SK-N-SH (cell line): ENCODE measurements at regions of chr2 and their contacts with region 1.

Region 1: DNA sequence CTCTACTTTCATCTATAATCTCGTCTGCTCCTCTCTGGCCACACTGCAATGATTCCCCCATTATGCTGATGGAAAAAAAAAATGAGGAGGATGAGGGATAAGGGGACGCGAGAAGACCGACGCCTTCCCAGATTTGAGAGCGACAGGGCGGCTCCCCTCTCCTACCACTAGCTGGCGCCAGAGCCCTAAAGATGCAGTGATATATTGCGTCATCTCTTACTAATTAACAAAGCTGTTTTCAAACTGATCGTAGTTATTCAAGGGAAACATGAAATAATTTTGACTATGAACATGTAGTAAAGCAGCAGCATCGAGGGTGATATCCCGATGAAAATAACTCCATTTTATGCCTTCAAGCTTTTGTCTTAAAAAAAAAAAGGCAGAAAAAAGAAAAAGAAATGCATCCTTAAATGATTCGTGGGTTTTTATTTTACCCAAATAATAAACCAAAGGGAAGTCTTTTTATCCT is 48.0 kb upstream of the HNRNPA3 start:
- DNase-seq: peak; percentile 78
- H3K4me3 ChIP-seq: peak overlapping the region; percentile 35 to 59
- H3K27ac ChIP-seq: peak overlapping the region; percentile 39 to 43; a peak in 3 of 4 replicates
- H3K4me1 ChIP-seq: peaks cover 12 to 24% of the 10 kb centered on the region in 2 experiments; a peak in 3 of 4 replicates
- H3K27me3 ChIP-seq: no peaks in the 10 kb centered on the region
- CTCF ChIP-seq: peak; percentile 100
- EP300 ChIP-seq: peak in 1 of 2 experiments; percentile 11; a peak in 1 of 4 replicates
- RAD21 ChIP-seq: peak; percentile 99

Region 2: DNA sequence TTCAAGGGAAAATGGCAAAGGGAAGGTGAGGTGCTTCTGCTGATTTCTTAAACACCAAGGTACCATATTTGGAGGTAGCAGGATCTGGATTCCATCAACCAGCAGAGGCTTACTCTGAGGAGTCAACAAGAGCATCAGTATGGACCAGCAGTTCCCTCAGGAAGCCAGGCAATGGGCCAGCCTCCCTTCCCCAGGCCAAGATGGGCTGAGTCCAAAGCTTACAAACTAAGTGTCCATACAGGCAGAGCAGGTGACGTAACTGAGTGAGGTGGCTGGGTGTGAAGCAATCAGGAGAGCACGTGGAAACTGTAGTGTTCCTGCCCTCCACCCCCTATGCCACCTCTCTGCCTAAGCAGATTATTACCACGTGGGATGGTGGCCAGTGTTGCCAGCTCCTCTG is 86.2 kb before region 1 on chr2:
- CTCF ChIA-PET with region 1: no interaction called
- POLR2A ChIA-PET with region 1: no interaction called
- DNase-seq: no peak
- H3K4me3 ChIP-seq: no peak overlapping the region
- H3K27ac ChIP-seq: no peak overlapping the region
- H3K4me1 ChIP-seq: no peaks in the 10 kb centered on the region; a peak in 1 of 4 replicates
- H3K27me3 ChIP-seq: no peaks in the 10 kb centered on the region
- CTCF ChIP-seq: no peak
- EP300 ChIP-seq: no peak
- RAD21 ChIP-seq: no peak

Region 3: GRCh38 chr2:177148477-177149154 is 16.0 kb before region 1 on chr2:
- CTCF ChIA-PET with region 1: interaction called, 95 read pairs
- POLR2A ChIA-PET with region 1: no interaction called
- DNase-seq: peak; percentile 70
- H3K4me3 ChIP-seq: peak overlapping the region; percentile 49 to 61
- H3K27ac ChIP-seq: no peak overlapping the region
- H3K4me1 ChIP-seq: peaks cover 4 to 5% of the 10 kb centered on the region in 2 experiments; a peak in 3 of 4 replicates
- H3K27me3 ChIP-seq: no peaks in the 10 kb centered on the region
- CTCF ChIP-seq: peak; percentile 91
- EP300 ChIP-seq: no peak
- RAD21 ChIP-seq: peak; percentile 76

Region 4: DNA sequence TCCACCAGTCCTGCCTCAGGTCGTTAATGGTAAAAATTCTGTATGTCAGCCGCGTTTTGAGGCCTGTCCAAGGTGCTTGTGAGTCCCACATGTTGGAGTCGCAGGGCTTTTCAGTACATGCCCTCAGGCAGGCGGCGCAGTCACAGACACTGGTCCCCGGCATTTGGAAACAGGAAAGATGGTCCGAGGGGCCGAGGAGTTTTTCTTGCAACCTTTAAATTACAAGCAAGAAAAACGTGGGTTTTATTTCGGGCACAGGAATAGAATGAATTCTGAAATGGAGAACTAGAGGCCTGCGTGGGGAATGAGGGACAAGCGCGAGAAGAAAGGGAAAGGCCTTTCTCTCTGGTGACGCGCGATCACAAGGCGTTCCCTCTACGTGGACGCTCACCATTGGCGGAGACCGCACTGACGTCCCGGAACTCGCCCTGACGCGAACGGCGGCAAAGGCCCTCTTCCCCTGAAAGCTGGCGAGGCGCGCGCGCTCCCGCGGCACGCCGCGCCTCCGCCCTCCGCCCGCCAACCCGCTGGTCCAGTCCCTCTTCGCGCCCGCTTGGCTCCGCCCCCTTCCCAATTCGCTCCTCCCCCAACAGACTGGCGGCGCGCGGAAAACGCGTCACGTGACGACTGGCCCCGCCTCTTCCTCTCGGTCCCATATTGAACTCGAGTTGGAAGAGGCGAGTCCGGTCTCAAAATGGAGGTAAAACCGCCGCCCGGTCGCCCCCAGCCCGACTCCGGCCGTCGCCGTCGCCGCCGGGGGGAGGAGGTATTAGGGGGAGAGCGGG is 47.7 kb after region 1 on chr2 and contains the start of gene HNRNPA3:
- CTCF ChIA-PET with region 1: interaction called, 10 read pairs
- POLR2A ChIA-PET with region 1: interaction called, 9 read pairs
- DNase-seq: peak; percentile 98
- H3K4me3 ChIP-seq: peak within 1 kb of the TSS; percentile 72 to 88
- H3K27ac ChIP-seq: peak within 1 kb of the TSS; percentile 97 to 99
- H3K4me1 ChIP-seq: peaks cover 0 to 23% of the 10 kb centered on the region in 2 experiments; a peak in 3 of 4 replicates
- H3K27me3 ChIP-seq: no peaks in the 10 kb centered on the region
- CTCF ChIP-seq: peak; percentile 41
- EP300 ChIP-seq: no peak
- RAD21 ChIP-seq: no peak
- polyA plus RNA-seq, gene HNRNPA3: 86.5 and 102 TPM in 2 replicates

Region 5: GRCh38 chr2:177239932-177240630 is 75.5 kb after region 1 on chr2:
- CTCF ChIA-PET with region 1: interaction called, 16 read pairs
- POLR2A ChIA-PET with region 1: no interaction called
- DNase-seq: no peak
- H3K4me3 ChIP-seq: peak overlapping the region in 1 of 2 experiments; percentile 5; a peak in 1 of 4 replicates
- H3K27ac ChIP-seq: peak overlapping the region; percentile 94 to 98
- H3K4me1 ChIP-seq: peaks cover 43 to 49% of the 10 kb centered on the region in 2 experiments
- H3K27me3 ChIP-seq: no peaks in the 10 kb centered on the region
- CTCF ChIP-seq: no peak
- EP300 ChIP-seq: no peak
- RAD21 ChIP-seq: no peak

Region 6: GRCh38 chr2:177296040-177296439 is 131.4 kb after region 1 on chr2:
- CTCF ChIA-PET with region 1: interaction called, 29 read pairs
- POLR2A ChIA-PET with region 1: no interaction called
- DNase-seq: peak; percentile 14
- H3K4me3 ChIP-seq: no peak overlapping the region
- H3K27ac ChIP-seq: peak overlapping the region; percentile 21 to 81; a peak in 2 of 4 replicates
- H3K4me1 ChIP-seq: no peaks in the 10 kb centered on the region
- H3K27me3 ChIP-seq: no peaks in the 10 kb centered on the region
- CTCF ChIP-seq: peak; percentile 57
- EP300 ChIP-seq: no peak
- RAD21 ChIP-seq: peak; percentile 46

Region 7: DNA sequence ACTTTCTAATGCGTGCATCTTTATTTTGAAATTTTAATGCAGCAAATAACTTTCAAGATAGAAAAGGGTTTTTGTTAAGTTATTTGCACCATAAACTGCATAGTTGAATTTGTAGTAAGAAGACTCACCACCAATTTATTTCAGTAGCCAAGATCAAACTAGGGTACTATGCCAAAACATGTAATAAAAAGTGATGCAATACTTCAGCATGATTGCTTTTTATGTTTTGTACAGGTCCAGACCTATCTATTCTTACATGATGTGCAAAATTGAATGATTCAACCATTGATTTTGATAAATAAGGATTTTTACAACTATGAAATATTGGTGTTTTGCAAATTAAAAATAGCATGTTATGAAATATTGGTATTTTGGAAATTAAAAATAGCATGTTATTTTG is 254.7 kb after region 1 on chr2:
- CTCF ChIA-PET with region 1: interaction called, 23 read pairs
- POLR2A ChIA-PET with region 1: no interaction called
- DNase-seq: no peak
- H3K4me3 ChIP-seq: no peak overlapping the region
- H3K27ac ChIP-seq: no peak overlapping the region
- H3K4me1 ChIP-seq: peaks cover 0 to 22% of the 10 kb centered on the region in 2 experiments; a peak in 2 of 4 replicates
- H3K27me3 ChIP-seq: no peaks in the 10 kb centered on the region
- CTCF ChIP-seq: no peak
- EP300 ChIP-seq: no peak
- RAD21 ChIP-seq: no peak

Region 8: DNA sequence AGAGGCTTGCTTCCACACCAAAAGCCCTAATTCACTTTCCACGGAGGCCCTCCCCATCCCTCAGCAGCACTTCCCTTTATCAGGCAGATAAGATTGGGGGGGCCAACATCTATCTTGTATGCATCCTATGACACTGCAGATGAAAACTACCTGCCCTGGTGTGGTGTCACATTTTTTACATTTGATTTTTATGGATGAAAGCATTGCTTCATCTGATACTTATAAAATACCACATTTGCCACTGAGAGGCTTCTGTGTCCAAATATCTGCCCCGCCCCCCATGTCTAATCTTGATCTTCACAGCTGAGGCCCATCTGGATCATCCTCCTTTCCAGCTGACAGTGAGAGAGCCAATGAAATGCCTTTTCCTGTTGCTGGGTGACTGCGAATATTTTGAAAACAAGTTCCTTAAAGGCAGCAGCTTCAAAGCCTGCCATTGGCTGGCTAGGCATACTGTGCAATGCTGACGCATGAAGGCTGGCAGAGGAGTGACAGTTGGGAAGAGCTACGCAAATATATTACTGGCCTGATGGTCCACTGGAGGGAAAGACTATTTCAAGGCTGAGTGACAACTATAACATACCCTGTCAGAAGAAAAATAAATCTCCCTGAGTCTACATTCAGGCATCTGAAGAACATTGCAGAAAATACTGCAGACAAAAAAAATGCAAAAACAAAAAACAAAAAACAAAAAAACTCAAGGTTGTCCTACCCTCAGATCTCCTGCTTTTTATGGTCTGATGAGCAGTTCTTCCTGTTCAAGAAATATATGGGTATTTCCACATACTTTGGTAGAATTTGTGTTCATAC is 589.3 kb after region 1 on chr2:
- CTCF ChIA-PET with region 1: interaction called, 30 read pairs
- POLR2A ChIA-PET with region 1: no interaction called
- DNase-seq: peak; percentile 41
- H3K4me3 ChIP-seq: no peak overlapping the region
- H3K27ac ChIP-seq: no peak overlapping the region; a peak in 1 of 4 replicates
- H3K4me1 ChIP-seq: peaks cover 0 to 23% of the 10 kb centered on the region in 2 experiments; a peak in 2 of 4 replicates
- H3K27me3 ChIP-seq: no peaks in the 10 kb centered on the region
- CTCF ChIP-seq: no peak
- EP300 ChIP-seq: no peak
- RAD21 ChIP-seq: no peak